Motor neuron (in vitro differentiated cells): ENCODE measurements at regions of chr2 and their contacts with region 1.

Region 1: GRCh38 chr2:30472326-30472725 is 25.3 kb downstream of the LCLAT1 start:
- ATAC-seq: no peak
- H3K4me3 ChIP-seq: no peak overlapping the region
- H3K27ac ChIP-seq: no peak overlapping the region
- H3K4me1 ChIP-seq: no peaks in the 10 kb centered on the region

Region 2: GRCh38 chr2:30231212-30231995 is 240.9 kb before region 1 on chr2 and contains the start of gene LBH:
- in situ Hi-C with region 1: loop called in 1 of 9 experiments (anchors 25 kb)
- ATAC-seq: peak; percentile 62 to 83 (median 77)
- H3K4me3 ChIP-seq: peak within 1 kb of the TSS; percentile 55 to 90 (median 85)
- H3K27ac ChIP-seq: peak within 1 kb of the TSS; percentile 82 to 96
- H3K4me1 ChIP-seq: peaks cover 18% of the 10 kb centered on the region in 2 donors
- total RNA-seq, gene LBH: 3.0 to 88.7 (median 52.3) TPM

Region 3: DNA sequence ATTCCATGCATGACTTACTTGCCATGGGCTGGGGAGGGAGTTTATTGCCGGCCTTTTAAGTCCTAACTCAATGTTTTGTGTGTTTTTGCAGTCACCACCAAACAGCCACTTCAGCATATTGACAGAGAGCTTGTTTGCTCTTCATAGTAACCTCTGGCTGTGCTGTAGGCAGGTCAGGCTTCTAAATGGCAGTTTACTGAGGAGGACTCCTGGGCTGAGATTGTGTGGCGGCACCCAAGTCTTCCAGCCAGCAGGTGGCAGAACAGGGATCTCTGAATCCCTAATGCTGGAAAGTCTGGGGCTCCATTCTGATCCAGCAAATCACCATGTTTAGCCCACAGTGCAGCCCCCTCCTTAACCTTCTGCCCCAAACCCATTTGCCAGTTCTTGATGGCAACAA is 213.7 kb after region 1 on chr2:
- in situ Hi-C with region 1: loop called in 1 of 9 experiments (anchors 25 kb)
- ATAC-seq: peak in 6 of 8 experiments; percentile 18 to 82 (median 50)
- H3K4me3 ChIP-seq: no peak overlapping the region
- H3K27ac ChIP-seq: no peak overlapping the region
- H3K4me1 ChIP-seq: peaks cover 16 to 18% of the 10 kb centered on the region in 2 donors

Region 4: GRCh38 chr2:30756047-30756719 is 283.9 kb after region 1 on chr2:
- in situ Hi-C with region 1: no loop called
- ATAC-seq: peak; percentile 47 to 96 (median 78)
- H3K4me3 ChIP-seq: no peak overlapping the region
- H3K27ac ChIP-seq: peak overlapping the region in 1 of 2 donors; percentile 71
- H3K4me1 ChIP-seq: peaks cover 0 to 33% of the 10 kb centered on the region in 2 donors

Region 5: DNA sequence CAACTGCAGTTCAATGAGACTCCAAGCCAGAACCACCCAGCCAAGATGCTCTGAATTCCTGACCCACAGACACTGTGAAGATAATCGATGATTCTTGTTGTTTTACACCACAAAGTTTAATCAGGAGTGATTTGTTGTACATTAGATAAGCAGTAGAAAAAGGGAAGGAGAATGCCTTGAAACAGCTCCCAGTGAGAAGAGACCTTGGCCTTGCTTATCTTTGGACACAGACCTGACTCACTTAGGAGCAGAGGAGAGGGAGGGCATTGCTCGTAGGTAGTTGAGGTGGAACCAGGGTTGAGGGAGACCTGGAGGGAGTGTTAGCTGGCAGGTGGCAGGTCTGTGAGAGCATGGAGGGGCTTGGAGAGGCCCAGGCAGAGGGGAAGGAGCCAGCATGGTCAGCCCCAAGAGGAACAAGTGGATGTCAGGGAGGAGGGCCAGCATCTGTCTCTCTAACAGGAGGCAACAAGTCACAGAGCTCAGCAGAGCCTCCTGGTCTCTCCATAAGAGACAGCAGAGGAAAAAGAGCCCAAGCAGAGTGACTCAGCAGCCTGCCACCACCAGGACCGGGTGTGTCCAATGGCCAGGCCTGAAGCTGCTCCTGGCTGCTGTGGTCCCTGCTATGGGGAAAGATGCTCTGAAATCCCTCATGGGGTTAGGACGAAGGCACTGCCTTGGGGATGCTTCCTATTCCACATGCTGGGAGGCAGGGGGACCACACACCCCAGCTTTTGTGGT is 496.5 kb after region 1 on chr2:
- in situ Hi-C with region 1: no loop called
- ATAC-seq: peak in 7 of 8 experiments; percentile 19 to 96 (median 55)
- H3K4me3 ChIP-seq: no peak overlapping the region
- H3K27ac ChIP-seq: no peak overlapping the region
- H3K4me1 ChIP-seq: peaks cover 0 to 9% of the 10 kb centered on the region in 2 donors

Region 6: DNA sequence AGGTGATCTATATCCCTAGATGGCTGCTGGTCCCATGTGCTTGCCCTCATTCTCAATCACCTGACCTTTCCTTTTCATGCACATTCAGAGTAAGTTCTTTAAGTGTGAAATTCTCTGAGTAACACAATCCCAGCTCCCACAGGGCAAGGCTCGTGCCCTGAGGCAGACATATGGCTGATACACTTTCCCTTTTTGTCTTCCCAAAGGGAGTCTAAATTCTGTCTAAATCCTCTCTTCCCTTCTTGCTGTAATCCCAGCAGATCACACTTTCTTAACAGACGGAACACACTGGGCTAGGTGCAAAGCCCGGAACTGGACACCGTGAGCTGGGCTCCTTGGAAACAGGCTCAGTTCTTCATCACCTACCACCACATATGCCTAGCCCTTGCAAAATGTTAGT is 518.3 kb after region 1 on chr2:
- in situ Hi-C with region 1: no loop called
- ATAC-seq: peak in 2 of 8 experiments; percentile 59 to 83
- H3K4me3 ChIP-seq: no peak overlapping the region
- H3K27ac ChIP-seq: no peak overlapping the region
- H3K4me1 ChIP-seq: peaks cover 11 to 27% of the 10 kb centered on the region in 2 donors